ENCODE measurements at regions of chr22 and their contacts with region 1.

Region 1: GRCh38 chr22:32005453-32005852 is 37.6 kb upstream of the SLC5A1 start:
- DNase-seq: peak; percentile 92
- H3K4me3 ChIP-seq: no peak overlapping the region
- H3K27ac ChIP-seq: no peak overlapping the region
- H3K4me1 ChIP-seq: peaks cover 9% of the 10 kb centered on the region
- H3K27me3 ChIP-seq: no peaks in the 10 kb centered on the region
- CTCF ChIP-seq: peak; percentile 6 to 7

Region 2: GRCh38 chr22:30754971-30755756 is 1250.3 kb before region 1 on chr22:
- CTCF ChIA-PET with region 1: no interaction called
- dilution Hi-C with region 1: no loop called
- in situ Hi-C with region 1: no loop called
- intact Hi-C with region 1: no loop called
- DNase-seq: peak; percentile 65
- H3K4me3 ChIP-seq: no peak overlapping the region
- H3K27ac ChIP-seq: no peak overlapping the region
- H3K4me1 ChIP-seq: no peaks in the 10 kb centered on the region
- H3K27me3 ChIP-seq: no peaks in the 10 kb centered on the region
- CTCF ChIP-seq: peak; percentile 67 to 92

Region 3: DNA sequence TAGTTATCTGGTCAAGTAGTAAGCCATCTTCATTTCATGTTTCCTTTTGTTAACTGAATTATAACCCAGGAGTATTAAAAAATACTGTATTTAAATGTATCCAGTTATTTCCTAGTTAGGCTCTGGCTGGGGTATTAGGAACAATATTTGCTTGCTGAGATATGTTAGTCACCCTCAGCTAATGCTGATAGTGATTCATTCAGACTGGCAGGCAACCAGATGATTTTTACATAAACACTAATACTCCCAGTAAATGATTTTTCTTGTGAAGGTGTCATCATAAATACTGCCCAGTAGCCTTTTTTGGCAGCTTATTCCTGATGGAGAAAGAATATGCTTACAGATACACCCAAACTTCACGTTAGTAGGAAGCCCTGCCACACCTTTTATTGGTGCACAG is 53.0 kb before region 1 on chr22:
- CTCF ChIA-PET with region 1: no interaction called
- dilution Hi-C with region 1: loop called (anchors 5 kb)
- in situ Hi-C with region 1: no loop called
- intact Hi-C with region 1: no loop called
- DNase-seq: peak; percentile 79
- H3K4me3 ChIP-seq: no peak overlapping the region
- H3K27ac ChIP-seq: peak overlapping the region; percentile 2
- H3K4me1 ChIP-seq: peaks cover 34% of the 10 kb centered on the region
- H3K27me3 ChIP-seq: no peaks in the 10 kb centered on the region
- CTCF ChIP-seq: no peak

Region 4: GRCh38 chr22:31977141-31977841 is 28.2 kb before region 1 on chr22:
- CTCF ChIA-PET with region 1: no interaction called
- dilution Hi-C with region 1: no loop called
- in situ Hi-C with region 1: no loop called
- intact Hi-C with region 1: no loop called
- DNase-seq: peak; percentile 72
- H3K4me3 ChIP-seq: no peak overlapping the region
- H3K27ac ChIP-seq: no peak overlapping the region
- H3K4me1 ChIP-seq: no peaks in the 10 kb centered on the region
- H3K27me3 ChIP-seq: no peaks in the 10 kb centered on the region
- CTCF ChIP-seq: peak; percentile 78 to 86